ENCODE measurements at regions of chr7 and their contacts with region 1.

Region 1: DNA sequence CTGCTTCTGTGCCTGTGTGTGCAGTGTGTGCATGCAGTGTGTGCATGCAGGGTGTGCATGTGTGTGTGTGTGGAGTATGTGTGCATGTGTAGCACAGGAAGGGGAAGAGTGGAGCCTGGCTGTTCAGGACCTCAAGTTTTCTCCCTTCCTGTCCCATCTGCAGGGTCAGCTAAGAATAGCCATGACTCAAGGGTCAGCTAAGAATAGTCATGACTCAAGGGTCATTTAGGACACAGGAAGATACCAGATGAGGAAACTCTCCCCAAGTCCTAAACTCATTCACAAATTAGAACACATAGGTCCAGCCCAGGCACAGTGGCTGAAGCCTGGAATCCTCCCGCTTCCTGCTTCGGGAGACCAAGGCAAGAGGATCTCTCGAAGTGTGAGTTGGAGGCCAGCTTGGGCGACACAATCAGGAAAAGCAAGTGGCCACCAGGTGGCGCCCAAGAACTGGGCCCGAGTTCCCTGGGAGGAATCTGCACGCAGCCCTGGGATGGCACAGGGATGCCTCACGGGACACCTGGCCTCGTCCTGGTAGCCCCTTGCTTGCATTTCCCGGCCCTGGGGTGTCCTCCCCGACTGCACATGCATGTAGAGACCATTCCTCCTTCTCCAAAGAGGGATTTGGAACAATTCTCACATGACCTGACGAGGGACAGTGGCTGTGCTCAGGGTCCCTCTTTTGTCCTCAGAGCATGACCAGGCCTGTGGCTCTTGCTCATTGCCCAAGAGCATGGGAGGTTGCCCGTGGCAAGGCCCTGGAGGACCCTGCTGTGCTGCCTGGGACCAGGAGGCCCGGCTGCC is 21.4 kb upstream of the VOPP1 start:
- DNase-seq: peak; percentile 63 to 80 (median 72)
- ATAC-seq: peak; percentile 93
- H3K4me3 ChIP-seq: no peak overlapping the region
- H3K27ac ChIP-seq: no peak overlapping the region
- H3K4me1 ChIP-seq: peaks cover 4 to 5% of the 10 kb centered on the region in 2 experiments; a peak in 3 of 5 replicates
- H3K27me3 ChIP-seq: peaks cover 0 to 8% of the 10 kb centered on the region in 2 experiments; a peak in 1 of 5 replicates
- CTCF ChIP-seq: peak; percentile 81 to 91 (median 84)
- EP300 ChIP-seq: no peak
- POLR2A ChIP-seq: no peak
- RAD21 ChIP-seq: peak; percentile 76 to 85

Region 2: GRCh38 chr7:55280031-55280454 is 313.7 kb before region 1 on chr7:
- CTCF ChIA-PET with region 1: interaction called, 3 read pairs
- POLR2A ChIA-PET with region 1: no interaction called
- in situ Hi-C with region 1: loop called (anchors 10 kb)
- intact Hi-C with region 1: loop called (anchors 10 kb)
- DNase-seq: peak; percentile 24 to 70 (median 44)
- ATAC-seq: peak; percentile 94
- H3K4me3 ChIP-seq: no peak overlapping the region
- H3K27ac ChIP-seq: no peak overlapping the region
- H3K4me1 ChIP-seq: no peaks in the 10 kb centered on the region
- H3K27me3 ChIP-seq: peaks cover 0 to 6% of the 10 kb centered on the region in 2 experiments; a peak in 2 of 5 replicates
- CTCF ChIP-seq: peak; percentile 64 to 85 (median 72)
- EP300 ChIP-seq: no peak
- POLR2A ChIP-seq: no peak
- RAD21 ChIP-seq: peak; percentile 83 to 84

Region 3: DNA sequence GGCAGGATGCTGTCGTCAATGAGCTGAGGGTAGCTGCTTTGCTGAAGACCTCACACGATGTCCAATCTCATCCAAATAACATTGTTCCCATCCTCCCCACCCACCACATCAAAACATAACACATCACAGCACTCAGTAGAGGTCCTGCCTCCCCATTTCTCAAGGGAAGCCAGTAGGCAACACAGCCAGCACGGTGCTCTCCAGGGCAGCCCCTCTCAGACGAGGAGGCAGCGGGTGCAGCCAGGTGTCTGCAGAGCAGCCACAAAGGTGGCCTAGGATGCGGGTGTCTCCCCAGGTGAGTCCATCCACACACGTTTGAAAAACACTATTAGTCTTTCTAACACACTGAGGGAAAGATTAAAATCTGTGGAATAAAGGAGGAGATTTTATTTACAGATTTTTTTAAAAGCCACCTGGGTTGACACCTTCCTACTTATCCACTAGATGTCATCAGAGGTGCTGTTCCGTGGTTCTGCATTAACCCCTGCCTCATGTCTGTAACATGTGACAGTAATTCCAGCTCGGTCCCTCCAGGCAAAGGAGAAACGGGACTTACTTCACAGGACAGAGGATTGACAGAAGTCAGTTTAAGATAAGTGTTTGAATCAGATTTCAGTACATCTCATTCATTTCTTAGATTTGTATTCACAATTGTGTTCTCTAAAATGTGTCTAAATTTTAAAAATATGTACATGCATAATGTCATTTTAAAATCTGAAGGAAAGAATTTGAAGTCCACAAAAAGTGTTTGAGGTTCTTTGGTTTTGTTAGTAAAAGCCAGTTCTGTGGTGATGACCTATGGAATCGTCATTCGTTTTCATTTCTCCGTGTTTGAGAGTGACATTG is 160.6 kb before region 1 on chr7:
- CTCF ChIA-PET with region 1: no interaction called
- POLR2A ChIA-PET with region 1: no interaction called
- in situ Hi-C with region 1: no loop called
- intact Hi-C with region 1: loop called (anchors 5 kb)
- DNase-seq: peak in 2 of 4 experiments; percentile 32 to 37
- ATAC-seq: peak; percentile 84
- H3K4me3 ChIP-seq: no peak overlapping the region
- H3K27ac ChIP-seq: no peak overlapping the region
- H3K4me1 ChIP-seq: no peaks in the 10 kb centered on the region
- H3K27me3 ChIP-seq: no peaks in the 10 kb centered on the region; a peak in 3 of 5 replicates
- CTCF ChIP-seq: peak; percentile 38 to 65 (median 49); a peak in 5 of 6 replicates
- EP300 ChIP-seq: no peak
- POLR2A ChIP-seq: no peak
- RAD21 ChIP-seq: peak; percentile 40 to 70; a peak in 3 of 4 replicates

Region 4: GRCh38 chr7:55439627-55440026 is 154.1 kb before region 1 on chr7:
- CTCF ChIA-PET with region 1: no interaction called
- POLR2A ChIA-PET with region 1: no interaction called
- in situ Hi-C with region 1: loop called (anchors 10 kb)
- intact Hi-C with region 1: loop called (anchors 5 kb)
- DNase-seq: no peak
- ATAC-seq: no peak
- H3K4me3 ChIP-seq: no peak overlapping the region
- H3K27ac ChIP-seq: no peak overlapping the region
- H3K4me1 ChIP-seq: no peaks in the 10 kb centered on the region
- H3K27me3 ChIP-seq: peaks cover 12 to 47% of the 10 kb centered on the region in 2 experiments; a peak in 4 of 5 replicates
- CTCF ChIP-seq: no peak
- EP300 ChIP-seq: no peak
- POLR2A ChIP-seq: no peak
- RAD21 ChIP-seq: no peak

Region 5: DNA sequence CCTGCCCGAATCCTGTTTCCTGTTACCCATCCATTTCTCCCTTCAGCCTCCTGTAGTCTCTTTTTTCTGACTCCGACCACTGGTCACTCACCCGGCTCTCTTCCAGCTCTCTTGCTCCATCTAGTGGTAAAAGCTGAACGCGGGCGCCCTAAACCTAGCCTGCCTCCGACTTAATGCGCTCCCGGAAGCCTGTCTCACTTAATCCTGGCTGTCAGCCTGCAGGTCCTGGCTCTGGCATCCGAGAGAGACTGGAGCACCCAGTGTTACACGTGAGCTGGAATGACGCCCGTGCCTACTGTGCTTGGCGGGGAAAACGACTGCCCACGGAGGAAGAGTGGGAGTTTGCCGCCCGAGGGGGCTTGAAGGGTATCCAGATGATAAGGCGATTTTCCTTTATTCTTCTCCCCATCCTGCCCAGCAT is 480.7 kb after region 1 on chr7:
- CTCF ChIA-PET with region 1: interaction called, 5 read pairs
- POLR2A ChIA-PET with region 1: no interaction called
- in situ Hi-C with region 1: no loop called
- intact Hi-C with region 1: loop called (anchors 5 kb)
- DNase-seq: peak; percentile 74 to 82 (median 80)
- ATAC-seq: peak; percentile 96
- H3K4me3 ChIP-seq: no peak overlapping the region
- H3K27ac ChIP-seq: no peak overlapping the region; the same call in 2 of the 3 replicates
- H3K4me1 ChIP-seq: peaks cover 0 to 5% of the 10 kb centered on the region in 2 experiments; a peak in 1 of 5 replicates
- H3K27me3 ChIP-seq: no peaks in the 10 kb centered on the region
- CTCF ChIP-seq: peak; percentile 86 to 92 (median 88)
- EP300 ChIP-seq: no peak
- POLR2A ChIP-seq: 0 out of 2 replicates have a peak, but pooled peaks have one; percentile 29
- RAD21 ChIP-seq: peak; percentile 88 to 91